Naive thymus-derived CD4-positive, alpha-beta T cell (primary cell): ENCODE measurements at regions of chr1 and their contacts with region 1.

Region 1: GRCh38 chr1:209747580-209748262 is 8.1 kb upstream of the TRAF3IP3 start:
- DNase-seq: peak; percentile 73 to 90 (median 82)
- ATAC-seq: peak; percentile 96
- H3K4me3 ChIP-seq: peak overlapping the region; percentile 76
- H3K4me3 Mint-ChIP-seq: peak overlapping the region; percentile 76 to 95 (median 92)
- H3K27ac ChIP-seq: peak overlapping the region; percentile 73
- H3K27ac Mint-ChIP-seq: peak overlapping the region; percentile 87 to 99 (median 95)
- H3K4me1 ChIP-seq: peaks cover 43 to 44% of the 10 kb centered on the region in 2 donors
- H3K4me1 Mint-ChIP-seq: peaks cover 31 to 74% (median 55%) of the 10 kb centered on the region in 7 donors
- H3K27me3 ChIP-seq: no peaks in the 10 kb centered on the region
- H3K27me3 Mint-ChIP-seq: no peaks in the 10 kb centered on the region

Region 2: DNA sequence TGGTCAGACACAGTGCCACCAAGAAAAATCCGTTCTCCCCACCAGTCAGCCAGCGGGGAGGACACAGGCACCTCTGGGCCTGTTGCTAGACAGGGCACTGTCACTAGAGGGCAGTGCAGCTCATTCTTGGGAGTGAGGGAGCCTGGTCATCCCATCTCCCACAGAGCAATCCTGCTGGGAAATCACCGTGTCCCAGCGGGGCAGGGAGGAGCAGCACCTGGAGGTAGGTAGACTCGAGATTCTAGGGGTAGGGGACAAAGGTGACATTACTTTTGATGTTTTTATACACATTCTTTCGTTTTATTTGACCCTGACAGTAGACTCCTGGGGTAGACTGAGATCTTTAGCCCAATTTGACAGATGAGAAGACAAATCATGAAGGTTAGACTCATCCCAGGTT is 170.9 kb before region 1 on chr1:
- CTCF ChIA-PET with region 1: interaction called, 9 read pairs
- POLR2A ChIA-PET with region 1: interaction called, 3 read pairs
- intact Hi-C with region 1: loop called (anchors 1 kb)
- DNase-seq: peak in 8 of 9 donors; percentile 29 to 77 (median 47)
- ATAC-seq: peak; percentile 85
- H3K4me3 ChIP-seq: no peak overlapping the region
- H3K4me3 Mint-ChIP-seq: no peak overlapping the region
- H3K27ac ChIP-seq: no peak overlapping the region
- H3K27ac Mint-ChIP-seq: no peak overlapping the region
- H3K4me1 ChIP-seq: no peaks in the 10 kb centered on the region
- H3K4me1 Mint-ChIP-seq: peaks cover 0 to 6% (median 0%) of the 10 kb centered on the region in 7 donors
- H3K27me3 ChIP-seq: no peaks in the 10 kb centered on the region
- H3K27me3 Mint-ChIP-seq: peaks cover 0 to 35% (median 5%) of the 10 kb centered on the region in 5 donors

Region 3: GRCh38 chr1:209627732-209628196 is 120.0 kb before region 1 on chr1:
- CTCF ChIA-PET with region 1: interaction called, 3 read pairs
- POLR2A ChIA-PET with region 1: no interaction called
- intact Hi-C with region 1: loop called in 1 of 2 experiments (anchors 1 kb)
- DNase-seq: peak; percentile 29 to 85 (median 61)
- ATAC-seq: peak; percentile 79
- H3K4me3 ChIP-seq: no peak overlapping the region
- H3K4me3 Mint-ChIP-seq: no peak overlapping the region
- H3K27ac ChIP-seq: no peak overlapping the region
- H3K27ac Mint-ChIP-seq: no peak overlapping the region
- H3K4me1 ChIP-seq: no peaks in the 10 kb centered on the region
- H3K4me1 Mint-ChIP-seq: peaks cover 0 to 14% (median 3%) of the 10 kb centered on the region in 7 donors
- H3K27me3 ChIP-seq: no peaks in the 10 kb centered on the region
- H3K27me3 Mint-ChIP-seq: no peaks in the 10 kb centered on the region

Region 4: GRCh38 chr1:209674957-209675564 is 72.7 kb before region 1 on chr1 and contains the start of gene G0S2:
- CTCF ChIA-PET with region 1: interaction called, 3 read pairs
- POLR2A ChIA-PET with region 1: no interaction called
- intact Hi-C with region 1: loop called in 1 of 2 experiments (anchors 5 kb)
- DNase-seq: peak in 3 of 9 donors; percentile 2 to 70 (median 15)
- ATAC-seq: peak; percentile 64
- H3K4me3 ChIP-seq: peak within 1 kb of the TSS; percentile 40
- H3K4me3 Mint-ChIP-seq: peak within 1 kb of the TSS; percentile 47 to 88 (median 80)
- H3K27ac ChIP-seq: no peak within 1 kb of the TSS
- H3K27ac Mint-ChIP-seq: peak within 1 kb of the TSS in 2 of 9 donors; percentile 36 to 73
- H3K4me1 ChIP-seq: peaks cover 10 to 18% of the 10 kb centered on the region in 2 donors
- H3K4me1 Mint-ChIP-seq: peaks cover 27 to 74% (median 43%) of the 10 kb centered on the region in 7 donors
- H3K27me3 ChIP-seq: no peaks in the 10 kb centered on the region
- H3K27me3 Mint-ChIP-seq: peaks cover 27 to 61% (median 55%) of the 10 kb centered on the region in 5 donors
- total RNA-seq, gene G0S2: 17.2 to 128 (median 81.1) TPM in 3 of 5 experiments, not detected in the others

Region 5: GRCh38 chr1:209723756-209724693 is 23.7 kb before region 1 on chr1:
- CTCF ChIA-PET with region 1: interaction called, 7 read pairs
- POLR2A ChIA-PET with region 1: interaction called, 5 read pairs
- intact Hi-C with region 1: loop called in 1 of 2 experiments (anchors 1 kb)
- DNase-seq: peak in 7 of 9 donors; percentile 7 to 66 (median 23)
- ATAC-seq: peak; percentile 36
- H3K4me3 ChIP-seq: no peak overlapping the region
- H3K4me3 Mint-ChIP-seq: peak overlapping the region in 9 of 10 donors; percentile 61 to 86 (median 78)
- H3K27ac ChIP-seq: peak overlapping the region; percentile 60
- H3K27ac Mint-ChIP-seq: peak overlapping the region; percentile 74 to 99 (median 93)
- H3K4me1 ChIP-seq: peaks cover 0 to 23% of the 10 kb centered on the region in 2 donors
- H3K4me1 Mint-ChIP-seq: peaks cover 7 to 49% (median 38%) of the 10 kb centered on the region in 7 donors
- H3K27me3 ChIP-seq: no peaks in the 10 kb centered on the region
- H3K27me3 Mint-ChIP-seq: no peaks in the 10 kb centered on the region

Region 6: DNA sequence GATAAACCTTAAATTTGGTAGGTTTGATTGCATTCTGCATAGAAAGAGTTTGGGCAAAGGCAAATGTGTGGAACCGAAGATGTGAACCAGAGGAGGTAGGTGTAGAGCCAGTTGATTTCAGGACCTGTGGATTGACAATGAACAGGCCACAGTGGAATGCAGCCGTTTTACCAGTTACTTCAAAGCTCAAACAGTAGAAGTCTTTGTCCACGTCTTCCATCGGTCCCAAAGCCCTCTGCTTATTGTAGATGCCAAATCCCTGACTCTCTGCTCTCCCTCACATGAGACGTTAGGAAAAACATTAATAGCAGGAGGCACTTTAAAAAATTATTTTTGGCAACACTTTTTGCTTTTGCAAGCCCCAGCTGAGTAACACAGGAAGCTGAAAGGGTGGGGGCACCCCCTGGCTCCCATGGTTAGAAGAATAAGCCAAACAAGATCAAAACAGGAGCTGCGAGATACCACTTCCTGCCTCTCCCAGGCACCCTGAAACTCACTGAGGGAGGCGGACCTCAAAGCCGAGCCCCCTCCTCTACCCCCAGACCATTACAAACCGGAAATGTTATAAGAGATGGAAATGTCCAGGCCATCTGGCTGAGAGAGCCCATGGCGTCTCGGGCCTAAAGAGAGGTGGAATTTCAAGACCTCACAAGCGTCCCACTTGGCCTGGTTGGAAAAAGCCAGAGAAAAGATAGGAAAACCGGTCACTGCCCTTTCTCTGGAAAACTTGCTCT is 21.6 kb after region 1 on chr1:
- CTCF ChIA-PET with region 1: interaction called, 52 read pairs
- POLR2A ChIA-PET with region 1: interaction called, 1,558 read pairs
- intact Hi-C with region 1: loop called in 1 of 2 experiments (anchors 1 kb)
- DNase-seq: peak in 8 of 9 donors; percentile 73 to 85 (median 83)
- ATAC-seq: peak; percentile 80
- H3K4me3 ChIP-seq: peak overlapping the region; percentile 88
- H3K4me3 Mint-ChIP-seq: no peak overlapping the region
- H3K27ac ChIP-seq: peak overlapping the region; percentile 83
- H3K27ac Mint-ChIP-seq: no peak overlapping the region
- H3K4me1 ChIP-seq: peaks cover 44 to 58% of the 10 kb centered on the region in 2 donors
- H3K4me1 Mint-ChIP-seq: peaks cover 31 to 40% (median 35%) of the 10 kb centered on the region in 7 donors
- H3K27me3 ChIP-seq: no peaks in the 10 kb centered on the region
- H3K27me3 Mint-ChIP-seq: no peaks in the 10 kb centered on the region

Region 7: GRCh38 chr1:209827384-209828262 is 79.9 kb after region 1 on chr1 and contains the start of gene UTP25:
- CTCF ChIA-PET with region 1: interaction called, 11 read pairs
- POLR2A ChIA-PET with region 1: interaction called, 5 read pairs
- intact Hi-C with region 1: no loop called
- DNase-seq: peak; percentile 68 to 94 (median 91)
- ATAC-seq: peak; percentile 97
- H3K4me3 ChIP-seq: peak within 1 kb of the TSS; percentile 98
- H3K4me3 Mint-ChIP-seq: peak within 1 kb of the TSS; percentile 77 to 97 (median 92)
- H3K27ac ChIP-seq: peak within 1 kb of the TSS; percentile 84
- H3K27ac Mint-ChIP-seq: peak within 1 kb of the TSS; percentile 74 to 96 (median 89)
- H3K4me1 ChIP-seq: peaks cover 8 to 16% of the 10 kb centered on the region in 2 donors
- H3K4me1 Mint-ChIP-seq: peaks cover 24 to 58% (median 49%) of the 10 kb centered on the region in 7 donors
- H3K27me3 ChIP-seq: no peaks in the 10 kb centered on the region
- H3K27me3 Mint-ChIP-seq: peaks cover 0 to 12% (median 5%) of the 10 kb centered on the region in 5 donors
- total RNA-seq, gene UTP25: 6.0 to 16.3 (median 12.7) TPM